ENCODE measurements at regions of chr10 and their contacts with region 1.

Region 1: DNA sequence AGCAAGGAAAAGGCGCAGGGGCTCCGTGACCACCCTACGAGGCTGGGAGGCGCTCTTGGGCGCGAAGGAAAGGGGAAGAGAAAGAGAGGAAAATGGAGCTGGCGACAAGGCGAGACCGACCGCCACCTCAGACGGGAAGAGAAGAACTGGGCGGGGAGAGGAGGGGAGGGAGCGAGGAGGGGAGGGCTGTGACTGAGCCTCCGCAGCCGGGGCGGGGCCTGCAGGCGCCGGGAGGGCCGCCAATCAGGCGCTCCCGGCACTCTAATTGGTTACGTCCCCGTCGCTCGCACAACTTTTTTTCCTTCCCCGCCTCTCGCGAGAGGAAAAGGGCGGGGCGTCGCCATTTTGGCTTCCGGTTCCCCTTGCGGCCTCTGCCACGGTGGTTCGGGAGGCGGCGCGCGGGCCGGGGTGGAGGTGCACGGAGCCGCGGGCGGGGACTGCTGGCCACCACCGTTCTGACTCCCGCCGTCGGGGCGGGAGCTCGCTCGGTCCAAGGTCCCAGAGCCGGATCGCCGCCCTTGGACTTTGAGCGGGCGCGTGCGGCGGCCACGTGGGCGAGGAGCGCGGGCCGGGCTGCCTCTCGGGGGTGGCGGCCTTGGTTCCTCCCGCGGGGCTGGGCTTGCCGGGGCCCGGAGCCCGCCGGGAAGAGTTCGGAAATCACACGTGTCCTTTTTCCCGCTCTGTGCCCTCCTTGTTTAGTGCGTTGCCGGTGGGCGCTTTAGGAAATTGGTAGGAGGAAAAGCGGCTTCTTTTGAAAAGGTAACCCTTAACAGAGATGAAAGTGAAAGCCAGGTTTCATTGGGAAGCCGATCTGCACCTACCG is at the start of gene GDI2:
- DNase-seq: peak; percentile 97
- ATAC-seq: peak; percentile 92
- H3K4me3 Mint-ChIP-seq: peak within 1 kb of the TSS; percentile 86
- H3K27ac Mint-ChIP-seq: peak within 1 kb of the TSS; percentile 94
- H3K4me1 Mint-ChIP-seq: peaks cover 60% of the 10 kb centered on the region
- H3K27me3 Mint-ChIP-seq: no peaks in the 10 kb centered on the region
- total RNA-seq, gene GDI2: 237 to 243 TPM

Region 2: GRCh38 chr10:5764422-5765297 is 48.8 kb before region 1 on chr10:
- CTCF ChIA-PET with region 1: no interaction called
- POLR2A ChIA-PET with region 1: no interaction called
- DNase-seq: no peak
- ATAC-seq: no peak
- H3K4me3 Mint-ChIP-seq: no peak overlapping the region
- H3K27ac Mint-ChIP-seq: peak overlapping the region; percentile 27
- H3K4me1 Mint-ChIP-seq: no peaks in the 10 kb centered on the region
- H3K27me3 Mint-ChIP-seq: no peaks in the 10 kb centered on the region

Region 3: GRCh38 chr10:5776136-5776880 is 37.2 kb before region 1 on chr10:
- CTCF ChIA-PET with region 1: interaction called, 5 read pairs
- POLR2A ChIA-PET with region 1: interaction called, 13 read pairs
- DNase-seq: no peak
- ATAC-seq: peak; percentile 40
- H3K4me3 Mint-ChIP-seq: peak overlapping the region; percentile 59
- H3K27ac Mint-ChIP-seq: peak overlapping the region; percentile 92
- H3K4me1 Mint-ChIP-seq: peaks cover 48% of the 10 kb centered on the region
- H3K27me3 Mint-ChIP-seq: no peaks in the 10 kb centered on the region